GM12878 (cell line): ENCODE measurements at regions of chr3 and their contacts with region 1.

Region 1: GRCh38 chr3:61912158-61912557 is 350.8 kb downstream of the PTPRG start:
- DNase-seq: no peak
- ATAC-seq: peak; percentile 73
- H3K4me3 ChIP-seq: no peak overlapping the region
- H3K27ac ChIP-seq: no peak overlapping the region
- H3K4me1 ChIP-seq: 0 out of 2 replicates have a peak, but pooled peaks cover 4% of the 10 kb centered on the region
- H3K27me3 ChIP-seq: 0 out of 4 replicates have a peak, but pooled peaks cover 0 to 2% of the 10 kb centered on the region in 2 experiments
- CTCF ChIP-seq: no peak
- EP300 ChIP-seq: peak in 1 of 2 experiments; percentile 72; a peak in 1 of 4 replicates
- POLR2A ChIP-seq: no peak
- RAD21 ChIP-seq: no peak

Region 2: GRCh38 chr3:61637088-61638051 is 274.8 kb before region 1 on chr3:
- CTCF ChIA-PET with region 1: no interaction called
- POLR2A ChIA-PET with region 1: no interaction called
- RAD21 ChIA-PET with region 1: no interaction called
- SMC1A ChIA-PET with region 1: no interaction called
- in situ Hi-C with region 1: no loop called
- intact Hi-C with region 1: loop called (anchors 10 kb)
- DNase-seq: peak; percentile 48
- ATAC-seq: peak; percentile 97
- H3K4me3 ChIP-seq: no peak overlapping the region
- H3K27ac ChIP-seq: no peak overlapping the region
- H3K4me1 ChIP-seq: peaks cover 10% of the 10 kb centered on the region; the same call in 1 of the 2 replicates
- H3K27me3 ChIP-seq: no peaks in the 10 kb centered on the region
- CTCF ChIP-seq: no peak
- EP300 ChIP-seq: peak; percentile 56 to 95; a peak in 3 of 4 replicates
- POLR2A ChIP-seq: no peak
- RAD21 ChIP-seq: no peak

Region 3: GRCh38 chr3:61872077-61872706 is 40.0 kb before region 1 on chr3:
- CTCF ChIA-PET with region 1: interaction called, 3 read pairs
- POLR2A ChIA-PET with region 1: no interaction called
- RAD21 ChIA-PET with region 1: interaction called, 5 read pairs
- SMC1A ChIA-PET with region 1: interaction called, 10 read pairs
- in situ Hi-C with region 1: no loop called
- intact Hi-C with region 1: no loop called
- DNase-seq: no peak
- ATAC-seq: no peak
- H3K4me3 ChIP-seq: no peak overlapping the region
- H3K27ac ChIP-seq: no peak overlapping the region
- H3K4me1 ChIP-seq: no peaks in the 10 kb centered on the region
- H3K27me3 ChIP-seq: no peaks in the 10 kb centered on the region
- CTCF ChIP-seq: no peak
- EP300 ChIP-seq: no peak
- POLR2A ChIP-seq: no peak
- RAD21 ChIP-seq: no peak

Region 4: GRCh38 chr3:61927332-61927731 is 15.2 kb after region 1 on chr3:
- CTCF ChIA-PET with region 1: interaction called, 14 read pairs
- POLR2A ChIA-PET with region 1: interaction called, 4 read pairs
- RAD21 ChIA-PET with region 1: interaction called, 32 read pairs
- SMC1A ChIA-PET with region 1: interaction called, 159 read pairs
- in situ Hi-C with region 1: no loop called
- intact Hi-C with region 1: no loop called
- DNase-seq: no peak
- ATAC-seq: no peak; the same call in 1 of the 3 replicates
- H3K4me3 ChIP-seq: no peak overlapping the region
- H3K27ac ChIP-seq: no peak overlapping the region
- H3K4me1 ChIP-seq: no peaks in the 10 kb centered on the region
- H3K27me3 ChIP-seq: no peaks in the 10 kb centered on the region; a peak in 1 of 4 replicates
- CTCF ChIP-seq: no peak
- EP300 ChIP-seq: no peak
- POLR2A ChIP-seq: no peak
- RAD21 ChIP-seq: no peak